Naive thymus-derived CD4-positive, alpha-beta T cell (primary cell): ENCODE measurements at regions of chr15 and their contacts with region 1.

Region 1: DNA sequence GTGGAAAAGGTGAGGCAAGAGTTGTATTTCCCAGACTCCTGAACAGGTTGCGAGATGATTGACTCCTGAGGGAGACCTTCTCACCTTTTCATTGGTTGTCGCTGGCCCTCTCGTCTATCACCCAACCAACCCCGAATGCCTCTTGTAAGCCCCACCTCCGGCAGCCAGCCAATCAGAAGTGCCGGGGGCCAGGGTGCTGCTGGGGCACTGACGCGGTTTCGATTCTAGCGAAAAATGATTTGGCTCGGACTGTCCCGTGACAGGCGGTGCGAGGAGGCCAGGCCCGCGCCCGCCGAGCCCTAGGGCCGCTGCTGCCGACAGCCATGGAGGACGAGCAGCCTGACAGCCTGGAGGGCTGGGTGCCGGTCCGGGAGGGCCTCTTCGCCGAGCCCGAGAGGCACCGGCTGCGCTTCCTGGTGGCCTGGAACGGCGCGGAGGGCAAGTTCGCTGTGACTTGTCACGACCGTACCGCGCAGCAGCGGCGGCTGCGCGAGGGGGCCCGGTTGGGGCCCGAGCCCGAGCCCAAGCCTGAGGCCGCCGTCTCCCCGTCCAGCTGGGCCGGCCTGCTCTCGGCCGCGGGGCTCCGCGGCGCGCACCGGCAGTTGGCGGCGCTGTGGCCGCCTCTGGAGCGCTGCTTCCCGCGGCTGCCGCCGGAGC is at the start of gene WHAMM:
- DNase-seq: peak; percentile 85 to 97 (median 94)
- ATAC-seq: peak; percentile 96
- H3K4me3 ChIP-seq: peak within 1 kb of the TSS; percentile 73
- H3K4me3 Mint-ChIP-seq: peak within 1 kb of the TSS; percentile 89 to 99 (median 95)
- H3K27ac ChIP-seq: peak within 1 kb of the TSS; percentile 100
- H3K27ac Mint-ChIP-seq: peak within 1 kb of the TSS; percentile 92 to 100 (median 97)
- H3K4me1 ChIP-seq: peaks cover 8 to 22% of the 10 kb centered on the region in 2 donors
- H3K4me1 Mint-ChIP-seq: peaks cover 21 to 44% (median 33%) of the 10 kb centered on the region in 7 donors
- H3K27me3 ChIP-seq: no peaks in the 10 kb centered on the region
- H3K27me3 Mint-ChIP-seq: peaks cover 0 to 21% (median 0%) of the 10 kb centered on the region in 5 donors
- total RNA-seq, gene WHAMM: 14.1 to 72.2 (median 37.1) TPM

Region 2: DNA sequence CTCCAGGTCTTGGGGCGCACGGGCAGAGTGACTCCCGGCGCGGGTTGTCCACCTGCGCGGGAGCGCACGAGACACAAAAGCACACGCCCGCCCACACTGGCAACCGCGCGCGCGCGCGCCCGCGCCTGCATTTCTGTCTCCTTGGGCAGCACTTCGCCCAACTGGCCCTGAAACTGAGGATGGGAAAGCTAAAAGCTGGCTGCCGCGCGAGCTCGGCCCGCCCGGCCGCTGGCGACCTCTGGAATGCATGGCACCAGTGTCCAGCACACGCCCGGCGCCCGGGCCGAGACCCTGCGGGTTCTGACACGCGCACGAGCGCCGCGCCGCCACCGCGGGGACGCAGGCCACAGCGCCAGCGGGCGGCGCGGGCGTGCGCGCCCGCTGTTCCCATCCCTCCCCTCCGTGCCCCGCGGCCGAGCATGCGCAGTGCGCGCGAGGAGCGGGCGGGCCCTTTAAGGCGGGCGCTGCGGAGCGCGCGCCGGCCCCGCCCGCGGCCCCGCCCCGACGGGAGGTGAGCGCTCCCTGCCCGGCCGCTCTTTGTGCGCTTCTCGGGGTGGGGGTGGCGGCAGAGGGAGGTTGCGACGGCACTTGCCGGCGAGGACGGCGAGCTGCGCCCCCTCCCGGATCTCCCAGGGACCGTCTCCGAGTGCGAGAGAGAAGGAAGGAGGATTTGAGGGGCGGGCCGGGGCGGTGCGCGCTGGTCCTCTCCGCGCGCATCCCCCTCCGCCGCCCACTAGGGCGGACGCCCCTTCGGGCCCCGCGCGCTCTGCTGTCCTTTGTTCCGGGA is 762.7 kb before region 1 on chr15:
- CTCF ChIA-PET with region 1: no interaction called
- POLR2A ChIA-PET with region 1: no interaction called
- intact Hi-C with region 1: loop called in 1 of 2 experiments (anchors 5 kb)
- DNase-seq: peak; percentile 85 to 93 (median 91)
- ATAC-seq: peak; percentile 86
- H3K4me3 ChIP-seq: peak overlapping the region; percentile 93
- H3K4me3 Mint-ChIP-seq: peak overlapping the region; percentile 88 to 94 (median 91)
- H3K27ac ChIP-seq: peak overlapping the region; percentile 72
- H3K27ac Mint-ChIP-seq: peak overlapping the region in 8 of 9 donors; percentile 31 to 93 (median 82)
- H3K4me1 ChIP-seq: peaks cover 0 to 8% of the 10 kb centered on the region in 2 donors
- H3K4me1 Mint-ChIP-seq: peaks cover 4 to 21% (median 11%) of the 10 kb centered on the region in 7 donors
- H3K27me3 ChIP-seq: no peaks in the 10 kb centered on the region
- H3K27me3 Mint-ChIP-seq: peaks cover 8 to 45% (median 11%) of the 10 kb centered on the region in 5 donors

Region 3: GRCh38 chr15:82709421-82710207 is 99.9 kb before region 1 on chr15 and contains the start of gene AP3B2:
- CTCF ChIA-PET with region 1: no interaction called
- POLR2A ChIA-PET with region 1: no interaction called
- intact Hi-C with region 1: loop called in 1 of 2 experiments (anchors 1 kb)
- DNase-seq: peak; percentile 28 to 73 (median 56)
- ATAC-seq: peak; percentile 93
- H3K4me3 ChIP-seq: peak within 1 kb of the TSS; percentile 61
- H3K4me3 Mint-ChIP-seq: peak within 1 kb of the TSS in 9 of 10 donors; percentile 51 to 87 (median 67)
- H3K27ac ChIP-seq: peak within 1 kb of the TSS; percentile 7
- H3K27ac Mint-ChIP-seq: no peak within 1 kb of the TSS
- H3K4me1 ChIP-seq: peaks cover 0 to 4% of the 10 kb centered on the region in 2 donors
- H3K4me1 Mint-ChIP-seq: peaks cover 0 to 8% (median 0%) of the 10 kb centered on the region in 7 donors
- H3K27me3 ChIP-seq: peaks cover 0 to 2% of the 10 kb centered on the region in 2 donors
- H3K27me3 Mint-ChIP-seq: peaks cover 0 to 32% (median 18%) of the 10 kb centered on the region in 5 donors
- total RNA-seq, gene AP3B2: 0.56 to 1.2 (median 0.85) TPM in 4 of 5 experiments, not detected in the other

Region 4: GRCh38 chr15:82849556-82850512 is 40.3 kb after region 1 on chr15:
- CTCF ChIA-PET with region 1: no interaction called
- POLR2A ChIA-PET with region 1: interaction called, 3 read pairs
- intact Hi-C with region 1: loop called in 1 of 2 experiments (anchors 2 kb)
- DNase-seq: peak; percentile 12 to 53 (median 33)
- ATAC-seq: peak; percentile 78
- H3K4me3 ChIP-seq: no peak overlapping the region
- H3K4me3 Mint-ChIP-seq: no peak overlapping the region
- H3K27ac ChIP-seq: no peak overlapping the region
- H3K27ac Mint-ChIP-seq: peak overlapping the region in 3 of 9 donors; percentile 36 to 70 (median 56)
- H3K4me1 ChIP-seq: no peaks in the 10 kb centered on the region
- H3K4me1 Mint-ChIP-seq: peaks cover 11 to 29% (median 20%) of the 10 kb centered on the region in 7 donors
- H3K27me3 ChIP-seq: no peaks in the 10 kb centered on the region
- H3K27me3 Mint-ChIP-seq: peaks cover 0 to 18% (median 0%) of the 10 kb centered on the region in 5 donors

Region 5: GRCh38 chr15:83011271-83012075 is 201.9 kb after region 1 on chr15 and contains the start of gene C15orf40:
- CTCF ChIA-PET with region 1: no interaction called
- POLR2A ChIA-PET with region 1: interaction called, 5 read pairs
- intact Hi-C with region 1: loop called in 1 of 2 experiments (anchors 1 kb)
- DNase-seq: peak; percentile 71 to 90 (median 80)
- ATAC-seq: peak; percentile 92
- H3K4me3 ChIP-seq: peak within 1 kb of the TSS; percentile 91
- H3K4me3 Mint-ChIP-seq: peak within 1 kb of the TSS; percentile 91 to 100 (median 96)
- H3K27ac ChIP-seq: peak within 1 kb of the TSS; percentile 77
- H3K27ac Mint-ChIP-seq: peak within 1 kb of the TSS; percentile 88 to 98 (median 92)
- H3K4me1 ChIP-seq: peaks cover 14 to 24% of the 10 kb centered on the region in 2 donors
- H3K4me1 Mint-ChIP-seq: peaks cover 43 to 70% (median 55%) of the 10 kb centered on the region in 7 donors
- H3K27me3 ChIP-seq: no peaks in the 10 kb centered on the region
- H3K27me3 Mint-ChIP-seq: no peaks in the 10 kb centered on the region
- total RNA-seq, gene C15orf40: 12.1 to 47.2 (median 28.9) TPM